Ovary (tissue), 10 donors: ENCODE measurements at regions of chr9 and their contacts with region 1.

Region 1: GRCh38 chr9:3793971-3794383 is 268.2 kb upstream of the RFX3 start:
- DNase-seq: no peak
- H3K4me3 ChIP-seq: no peak overlapping the region
- H3K27ac ChIP-seq: peak overlapping the region in 1 of 2 donors; percentile 59
- H3K4me1 ChIP-seq: peaks cover 1% of the 10 kb centered on the region
- H3K27me3 ChIP-seq: no peaks in the 10 kb centered on the region
- CTCF ChIP-seq: no peak
- EP300 ChIP-seq: no peak
- POLR2A ChIP-seq: no peak

Region 2: GRCh38 chr9:3746296-3747275 is 47.4 kb before region 1 on chr9:
- intact Hi-C with region 1: loop called in 1 of 4 experiments (anchors 5 kb)
- DNase-seq: no peak
- H3K4me3 ChIP-seq: no peak overlapping the region
- H3K27ac ChIP-seq: no peak overlapping the region
- H3K4me1 ChIP-seq: peaks cover 2% of the 10 kb centered on the region
- H3K27me3 ChIP-seq: no peaks in the 10 kb centered on the region
- CTCF ChIP-seq: no peak
- EP300 ChIP-seq: no peak
- POLR2A ChIP-seq: no peak

Region 3: DNA sequence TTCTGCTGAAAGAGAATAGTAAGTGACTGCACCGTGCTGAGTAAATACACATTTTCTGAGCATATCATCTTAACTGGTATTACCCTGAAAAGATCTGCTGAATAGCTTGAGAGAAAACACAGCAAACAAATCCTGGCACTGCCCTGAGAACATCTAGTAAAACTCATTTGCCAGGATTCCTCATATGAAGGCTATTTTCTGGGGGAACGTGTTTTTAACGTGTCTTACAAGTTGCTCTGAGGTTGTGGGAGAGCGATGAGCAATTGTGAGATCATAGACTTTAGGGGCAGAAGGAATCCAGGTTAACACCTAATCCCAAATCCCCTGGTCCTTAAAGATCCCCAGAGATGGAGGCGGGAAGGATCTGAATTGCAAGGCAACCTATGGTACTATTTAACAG is 63.7 kb after region 1 on chr9:
- intact Hi-C with region 1: loop called in 1 of 4 experiments (anchors 10 kb)
- DNase-seq: no peak
- H3K4me3 ChIP-seq: no peak overlapping the region
- H3K27ac ChIP-seq: no peak overlapping the region
- H3K4me1 ChIP-seq: no peaks in the 10 kb centered on the region
- H3K27me3 ChIP-seq: no peaks in the 10 kb centered on the region
- CTCF ChIP-seq: no peak
- EP300 ChIP-seq: no peak
- POLR2A ChIP-seq: no peak